SK-MEL-5 (cell line): ENCODE measurements at regions of chr20 and their contacts with region 1.

Region 1: DNA sequence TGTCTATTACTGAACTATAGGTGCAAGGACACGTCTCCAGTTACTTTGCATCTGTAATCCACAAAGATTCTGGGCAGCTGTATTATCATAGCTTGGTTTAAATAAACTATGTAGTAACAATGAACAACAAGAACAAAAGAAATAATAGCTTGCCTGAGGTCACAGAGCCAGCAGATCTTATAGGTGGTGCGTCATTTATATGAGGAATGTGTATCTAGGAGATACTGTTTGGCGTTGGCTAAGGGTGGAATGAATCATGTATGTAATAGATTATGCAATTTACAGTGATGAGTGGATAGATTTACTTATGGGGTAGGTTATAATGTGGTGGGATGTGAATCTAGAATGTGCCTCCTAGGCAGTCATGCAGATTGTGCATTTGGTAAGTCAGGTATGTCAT is 42.8 kb downstream of the HNF4A start:
- DNase-seq: no peak

Region 2: DNA sequence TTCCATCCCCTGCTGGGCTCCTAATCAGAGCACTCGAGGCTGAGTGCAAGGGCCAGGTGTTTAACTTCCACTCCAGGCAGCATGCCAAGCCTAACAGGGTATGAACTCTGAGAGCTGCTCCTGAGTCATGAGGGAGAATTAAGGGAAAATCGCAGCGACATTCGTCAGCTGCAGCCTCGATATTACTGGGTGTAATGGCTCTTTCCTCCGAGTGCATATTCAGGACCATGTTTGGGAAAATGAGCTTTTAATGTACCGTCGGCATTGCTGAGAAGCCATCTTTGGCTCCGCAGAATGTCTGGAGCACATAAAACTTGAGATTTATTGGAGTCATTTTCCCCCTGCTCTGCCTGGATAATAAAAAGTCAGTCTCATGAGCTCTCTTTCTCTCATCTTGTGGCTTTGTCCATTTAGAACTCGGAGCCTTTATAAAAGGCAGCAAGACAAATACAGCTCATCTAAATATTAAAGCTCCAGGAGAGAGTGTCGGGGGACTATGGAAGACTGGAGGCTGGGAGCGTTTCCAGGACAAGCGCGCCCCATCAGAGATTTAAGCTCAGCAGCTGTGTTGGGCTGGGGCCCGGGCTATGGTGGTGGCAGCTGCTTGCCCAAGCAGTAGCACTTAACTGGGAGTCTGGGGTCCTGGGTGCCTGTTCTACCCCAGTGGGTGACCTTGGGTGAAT is 379.9 kb before region 1 on chr20:
- in situ Hi-C with region 1: no loop called
- DNase-seq: no peak

Region 3: DNA sequence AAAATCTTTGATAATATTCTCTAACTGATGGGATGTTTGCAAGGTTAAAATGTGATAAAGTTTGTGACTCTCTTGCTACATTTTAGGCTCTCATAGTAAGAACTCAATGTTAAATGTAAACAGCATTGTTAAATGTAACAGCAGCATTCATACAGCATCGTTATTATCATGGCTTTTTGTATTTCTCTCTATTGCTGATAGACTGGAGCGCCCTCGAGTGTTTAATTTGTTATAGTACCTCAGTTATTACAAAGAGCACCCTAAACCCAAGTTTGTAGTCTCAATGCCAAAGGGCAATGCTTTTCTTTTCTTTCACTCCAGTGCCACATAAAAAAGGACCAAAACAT is 62.5 kb after region 1 on chr20:
- in situ Hi-C with region 1: loop called (anchors 10 kb)
- DNase-seq: peak; percentile 72

Region 4: DNA sequence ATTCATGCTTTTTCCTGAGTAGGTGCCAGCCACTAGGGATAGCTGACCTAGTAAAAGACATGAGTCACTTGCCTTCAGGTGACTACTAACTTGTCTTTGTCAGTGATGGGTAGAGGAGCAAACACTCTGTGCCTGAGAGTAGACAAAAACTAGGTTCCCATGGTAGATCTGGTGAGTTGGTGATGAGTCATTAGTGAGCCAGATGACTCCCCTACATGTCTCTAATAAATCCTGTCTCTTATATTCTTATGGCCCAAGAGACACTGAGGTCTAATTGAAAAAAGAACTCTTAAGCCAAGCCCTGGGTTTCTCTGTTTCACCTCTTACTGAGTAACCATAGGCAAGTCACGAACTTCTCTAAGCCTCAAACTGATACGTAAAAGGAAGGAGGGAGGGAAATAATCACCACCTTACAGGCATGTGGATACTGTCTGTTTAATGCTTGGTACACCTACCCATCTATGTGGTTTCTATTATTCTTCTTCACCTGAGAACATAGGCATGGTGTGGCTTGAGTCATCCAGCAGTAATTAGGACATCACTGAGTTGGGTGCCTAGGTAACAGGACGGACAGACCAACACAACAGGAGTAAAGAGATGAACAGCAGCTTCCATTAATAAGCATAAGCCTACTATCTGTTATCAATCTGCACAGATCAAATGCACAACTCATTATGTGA is 97.6 kb after region 1 on chr20:
- in situ Hi-C with region 1: no loop called
- DNase-seq: no peak

Region 5: GRCh38 chr20:44714696-44715482 is 316.6 kb after region 1 on chr20 and contains the start of gene CCN5:
- in situ Hi-C with region 1: no loop called
- DNase-seq: peak; percentile 59
- total RNA-seq, gene CCN5: 0.45 and 0.85 TPM in 2 replicates